GM12878 (cell line): ENCODE measurements at regions of chr2 and their contacts with region 1.

Region 1: DNA sequence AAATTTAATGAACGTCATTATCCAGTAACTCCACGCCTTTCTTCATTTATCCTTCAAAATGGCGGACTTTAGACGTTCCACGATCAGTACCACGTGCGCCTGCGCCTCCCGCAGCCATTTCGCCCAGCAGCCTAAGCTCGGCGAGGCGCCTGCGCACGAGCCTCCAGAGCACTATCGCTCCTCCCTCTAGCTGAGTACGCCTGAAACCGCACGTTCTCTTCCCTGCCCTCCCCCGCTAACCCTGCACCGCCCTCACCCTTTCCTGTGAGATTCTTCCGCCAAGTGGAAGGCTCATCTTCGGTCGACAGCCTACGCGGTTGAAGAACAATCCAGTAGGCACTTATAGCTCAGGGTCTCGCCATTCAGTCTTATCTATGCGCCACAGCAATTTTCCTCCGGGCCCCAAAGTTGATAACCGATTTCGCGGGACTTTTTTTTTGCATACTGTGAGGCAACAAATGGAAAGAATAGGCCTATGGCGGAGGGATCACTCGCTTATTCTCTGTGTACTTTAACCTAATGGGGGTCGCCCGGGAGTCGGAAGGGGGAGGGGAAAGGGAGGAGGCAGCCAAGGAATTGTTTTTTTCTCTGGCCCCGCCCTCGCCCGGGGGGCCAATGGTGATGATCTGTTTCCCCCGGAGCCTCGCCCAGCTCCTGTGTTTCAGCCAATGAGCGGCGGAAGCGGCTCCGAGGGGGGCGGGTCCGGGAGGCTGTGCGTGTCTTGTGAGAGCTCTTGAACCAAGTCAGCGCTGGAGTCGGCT is at the start of gene KDM3A:
- DNase-seq: peak; percentile 97
- ATAC-seq: peak; percentile 91
- H3K4me3 ChIP-seq: peak within 1 kb of the TSS; percentile 78
- H3K27ac ChIP-seq: peak within 1 kb of the TSS; percentile 100
- H3K4me1 ChIP-seq: peaks cover 11% of the 10 kb centered on the region
- H3K27me3 ChIP-seq: no peaks in the 10 kb centered on the region
- CTCF ChIP-seq: no peak
- EP300 ChIP-seq: peak in 1 of 2 experiments; percentile 17; a peak in 3 of 4 replicates
- POLR2A ChIP-seq: no peak
- RAD21 ChIP-seq: 0 out of 2 replicates have a peak, but pooled peaks have one; percentile 4
- polyA plus RNA-seq, gene KDM3A: 3.8 to 4.9 TPM

Region 2: DNA sequence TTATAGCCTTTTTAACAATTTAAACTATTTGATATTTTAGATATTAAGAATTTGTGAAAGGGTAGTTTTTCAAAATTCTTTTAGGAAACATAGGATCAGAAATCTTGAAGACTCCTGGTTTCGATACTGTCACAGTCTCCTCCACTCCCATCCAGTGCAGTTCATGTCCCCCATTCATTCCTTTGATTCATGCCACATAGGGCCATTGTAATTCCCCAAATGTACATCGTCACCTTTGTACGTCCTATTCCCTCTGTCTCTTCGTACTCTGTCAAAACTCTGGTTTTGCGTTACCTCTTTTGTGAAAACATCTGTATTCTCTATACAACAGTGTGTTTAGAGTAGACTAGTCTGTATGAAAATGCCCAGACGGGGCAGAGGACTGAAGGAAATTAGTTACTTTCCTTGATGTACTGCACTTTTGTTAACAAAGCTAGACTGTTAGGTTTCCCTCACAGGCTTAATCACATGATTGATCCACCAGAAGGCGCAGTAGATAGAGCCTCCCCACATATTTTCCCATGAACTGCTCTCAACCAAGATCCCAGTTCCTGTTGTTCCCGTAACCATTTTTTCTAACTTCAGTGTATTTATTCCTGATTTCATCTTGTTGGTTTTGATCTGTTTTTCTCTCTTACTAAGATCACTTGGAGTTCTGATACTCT is 239.0 kb before region 1 on chr2:
- CTCF ChIA-PET with region 1: no interaction called
- POLR2A ChIA-PET with region 1: interaction called, 3 read pairs
- RAD21 ChIA-PET with region 1: no interaction called
- SMC1A ChIA-PET with region 1: interaction called, 5 read pairs
- in situ Hi-C with region 1: no loop called
- intact Hi-C with region 1: loop called (anchors 2 kb)
- DNase-seq: no peak
- ATAC-seq: no peak
- H3K4me3 ChIP-seq: 0 out of 2 replicates have a peak overlapping the region, but pooled peaks have one; percentile 16
- H3K27ac ChIP-seq: no peak overlapping the region
- H3K4me1 ChIP-seq: peaks cover 8% of the 10 kb centered on the region
- H3K27me3 ChIP-seq: no peaks in the 10 kb centered on the region
- CTCF ChIP-seq: no peak
- EP300 ChIP-seq: no peak
- POLR2A ChIP-seq: no peak
- RAD21 ChIP-seq: no peak

Region 3: GRCh38 chr2:86319700-86320580 is 120.9 kb before region 1 on chr2:
- CTCF ChIA-PET with region 1: no interaction called
- POLR2A ChIA-PET with region 1: no interaction called
- RAD21 ChIA-PET with region 1: no interaction called
- SMC1A ChIA-PET with region 1: no interaction called
- in situ Hi-C with region 1: no loop called
- intact Hi-C with region 1: no loop called
- DNase-seq: no peak
- ATAC-seq: no peak
- H3K4me3 ChIP-seq: no peak overlapping the region
- H3K27ac ChIP-seq: no peak overlapping the region
- H3K4me1 ChIP-seq: no peaks in the 10 kb centered on the region
- H3K27me3 ChIP-seq: peaks cover 0 to 1% of the 10 kb centered on the region in 2 experiments; a peak in 2 of 4 replicates
- CTCF ChIP-seq: no peak
- EP300 ChIP-seq: no peak
- POLR2A ChIP-seq: no peak
- RAD21 ChIP-seq: no peak

Region 4: GRCh38 chr2:86396291-86396785 is 44.5 kb before region 1 on chr2:
- CTCF ChIA-PET with region 1: interaction called, 4 read pairs
- POLR2A ChIA-PET with region 1: interaction called, 3 read pairs
- RAD21 ChIA-PET with region 1: interaction called, 15 read pairs
- SMC1A ChIA-PET with region 1: interaction called, 4 read pairs
- in situ Hi-C with region 1: no loop called
- intact Hi-C with region 1: no loop called
- DNase-seq: no peak
- ATAC-seq: peak; percentile 57
- H3K4me3 ChIP-seq: no peak overlapping the region
- H3K27ac ChIP-seq: no peak overlapping the region
- H3K4me1 ChIP-seq: no peaks in the 10 kb centered on the region; the same call in 1 of the 2 replicates
- H3K27me3 ChIP-seq: no peaks in the 10 kb centered on the region
- CTCF ChIP-seq: peak; percentile 25 to 47 (median 31); a peak in 3 of 6 replicates
- EP300 ChIP-seq: no peak
- POLR2A ChIP-seq: no peak
- RAD21 ChIP-seq: peak; percentile 45; the same call in 1 of the 2 replicates

Region 5: GRCh38 chr2:86453836-86454235 is 13.0 kb after region 1 on chr2:
- CTCF ChIA-PET with region 1: interaction called, 9 read pairs
- POLR2A ChIA-PET with region 1: interaction called, 16 read pairs
- RAD21 ChIA-PET with region 1: interaction called, 3 read pairs
- SMC1A ChIA-PET with region 1: interaction called, 9 read pairs
- in situ Hi-C with region 1: no loop called
- intact Hi-C with region 1: no loop called
- DNase-seq: no peak
- ATAC-seq: no peak
- H3K4me3 ChIP-seq: no peak overlapping the region
- H3K27ac ChIP-seq: no peak overlapping the region
- H3K4me1 ChIP-seq: no peaks in the 10 kb centered on the region
- H3K27me3 ChIP-seq: no peaks in the 10 kb centered on the region
- CTCF ChIP-seq: no peak
- EP300 ChIP-seq: no peak
- POLR2A ChIP-seq: no peak
- RAD21 ChIP-seq: no peak

Region 6: DNA sequence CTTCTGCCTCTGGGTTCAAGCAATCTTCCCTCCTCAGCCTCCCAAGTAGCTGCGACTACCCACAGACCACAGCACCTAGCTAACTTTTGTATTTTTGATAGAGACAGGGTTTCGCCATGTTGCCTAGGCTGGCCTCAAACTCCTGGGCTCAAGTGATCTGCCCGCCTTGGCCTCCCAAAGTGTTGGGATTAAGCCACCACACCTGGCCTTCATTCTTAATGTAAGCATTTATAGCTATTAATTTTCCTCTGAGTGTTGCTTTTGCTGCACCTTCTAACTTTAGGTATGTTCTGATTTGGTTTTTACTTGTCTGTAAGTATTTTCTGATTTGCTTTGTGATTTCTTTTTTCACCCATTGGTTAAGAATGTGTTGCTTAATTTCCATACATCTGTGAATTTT is 92.8 kb after region 1 on chr2:
- CTCF ChIA-PET with region 1: no interaction called
- POLR2A ChIA-PET with region 1: no interaction called
- RAD21 ChIA-PET with region 1: no interaction called
- SMC1A ChIA-PET with region 1: no interaction called
- in situ Hi-C with region 1: no loop called
- intact Hi-C with region 1: no loop called
- DNase-seq: no peak
- ATAC-seq: no peak
- H3K4me3 ChIP-seq: no peak overlapping the region
- H3K27ac ChIP-seq: no peak overlapping the region
- H3K4me1 ChIP-seq: no peaks in the 10 kb centered on the region
- H3K27me3 ChIP-seq: no peaks in the 10 kb centered on the region
- CTCF ChIP-seq: no peak
- EP300 ChIP-seq: no peak
- POLR2A ChIP-seq: no peak
- RAD21 ChIP-seq: no peak

Region 7: DNA sequence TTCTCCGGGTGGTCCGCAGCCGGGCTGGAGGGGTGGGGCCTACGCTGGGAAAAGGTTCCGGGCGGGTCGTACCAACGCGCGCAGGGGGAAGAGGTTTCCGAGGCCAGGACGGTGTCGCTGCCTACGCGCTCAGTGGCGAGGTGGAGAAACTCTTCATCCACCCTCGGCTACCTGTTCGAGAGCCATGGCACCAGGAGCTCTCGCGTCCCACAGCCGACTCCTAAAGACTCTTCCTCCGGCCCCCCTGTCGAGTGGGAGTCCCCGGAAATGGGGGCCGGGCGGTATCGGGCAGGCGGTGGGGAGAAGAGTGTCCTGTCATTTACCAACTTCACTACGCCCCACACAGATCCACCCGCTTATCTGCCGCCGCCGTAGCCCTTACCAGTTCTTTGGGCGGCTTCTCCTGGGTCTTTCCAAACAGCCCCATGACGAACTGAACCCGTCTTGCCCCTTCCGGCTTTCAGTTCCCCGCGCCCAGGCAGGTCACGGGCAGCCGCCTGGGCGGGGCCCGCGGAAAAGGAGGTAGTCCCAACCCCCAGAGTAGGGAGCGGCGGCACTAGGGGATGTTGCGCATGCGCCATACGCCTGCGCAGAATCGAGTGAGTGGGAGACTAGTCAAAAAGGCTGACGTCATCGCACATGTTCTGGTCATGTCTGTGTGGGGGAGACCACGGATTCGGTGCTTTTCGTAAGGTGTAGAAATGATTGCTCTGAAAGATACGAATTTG is 122.3 kb after region 1 on chr2 and contains the start of gene CHMP3:
- CTCF ChIA-PET with region 1: interaction called, 5 read pairs
- POLR2A ChIA-PET with region 1: interaction called, 20 read pairs
- RAD21 ChIA-PET with region 1: no interaction called
- SMC1A ChIA-PET with region 1: interaction called, 7 read pairs
- in situ Hi-C with region 1: no loop called
- intact Hi-C with region 1: loop called (anchors 2 kb)
- DNase-seq: peak; percentile 94
- ATAC-seq: peak; percentile 94
- H3K4me3 ChIP-seq: peak within 1 kb of the TSS; percentile 89
- H3K27ac ChIP-seq: peak within 1 kb of the TSS; percentile 99
- H3K4me1 ChIP-seq: peaks cover 5% of the 10 kb centered on the region
- H3K27me3 ChIP-seq: no peaks in the 10 kb centered on the region
- CTCF ChIP-seq: no peak
- EP300 ChIP-seq: peak in 1 of 2 experiments; percentile 59; a peak in 1 of 4 replicates
- POLR2A ChIP-seq: peak; percentile 93
- RAD21 ChIP-seq: no peak
- polyA plus RNA-seq, gene CHMP3: 24.1 to 27.6 TPM

Region 8: GRCh38 chr2:86623651-86624541 is 183.1 kb after region 1 on chr2 and contains the start of gene RNF103:
- CTCF ChIA-PET with region 1: interaction called, 5 read pairs
- POLR2A ChIA-PET with region 1: interaction called, 25 read pairs
- RAD21 ChIA-PET with region 1: interaction called, 10 read pairs
- SMC1A ChIA-PET with region 1: no interaction called
- in situ Hi-C with region 1: no loop called
- intact Hi-C with region 1: loop called (anchors 1 kb)
- DNase-seq: peak; percentile 42
- ATAC-seq: peak; percentile 89
- H3K4me3 ChIP-seq: peak within 1 kb of the TSS; percentile 95
- H3K27ac ChIP-seq: peak within 1 kb of the TSS; percentile 90
- H3K4me1 ChIP-seq: peaks cover 3% of the 10 kb centered on the region
- H3K27me3 ChIP-seq: no peaks in the 10 kb centered on the region
- CTCF ChIP-seq: no peak
- EP300 ChIP-seq: 0 out of 4 replicates have a peak, but pooled peaks of 1 of the 2 experiments have one; percentile 8
- POLR2A ChIP-seq: peak; percentile 90
- RAD21 ChIP-seq: no peak
- polyA plus RNA-seq, gene RNF103: 2.4 to 2.5 TPM